ENCODE measurements at regions of chr14 and their contacts with region 1.

Region 1: GRCh38 chr14:61456720-61457119 is 135.3 kb downstream of the PRKCH start:
- DNase-seq: peak; percentile 66 to 91 (median 86)
- ATAC-seq: peak; percentile 39
- H3K4me3 ChIP-seq: no peak overlapping the region
- H3K4me3 Mint-ChIP-seq: no peak overlapping the region
- H3K27ac ChIP-seq: no peak overlapping the region
- H3K27ac Mint-ChIP-seq: peak overlapping the region; percentile 86
- H3K4me1 ChIP-seq: peaks cover 70% of the 10 kb centered on the region
- H3K4me1 Mint-ChIP-seq: peaks cover 85% of the 10 kb centered on the region
- H3K27me3 ChIP-seq: no peaks in the 10 kb centered on the region
- H3K27me3 Mint-ChIP-seq: no peaks in the 10 kb centered on the region
- CTCF ChIP-seq: peak; percentile 84

Region 2: DNA sequence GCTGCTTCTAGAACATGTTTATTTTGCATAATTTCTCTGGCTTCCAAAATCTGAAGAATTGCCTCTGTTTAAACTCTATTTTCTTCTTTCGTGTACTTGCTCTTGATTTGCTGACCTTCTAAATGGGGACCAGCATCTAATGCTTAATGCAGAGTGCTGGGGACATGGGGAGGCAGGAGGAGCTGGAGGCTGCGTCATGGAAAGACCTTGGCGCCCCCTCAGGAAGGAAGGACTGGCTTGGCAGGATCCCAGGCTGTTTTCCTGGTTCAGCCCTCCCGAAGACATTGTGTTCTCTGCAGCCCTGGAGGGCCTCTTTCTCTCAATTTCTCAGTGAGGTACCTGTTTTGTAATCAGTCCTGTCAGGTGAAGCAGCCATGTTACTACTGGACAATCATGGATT is 129.9 kb before region 1 on chr14:
- CTCF ChIA-PET with region 1: interaction called, 20 read pairs
- POLR2A ChIA-PET with region 1: interaction called, 16 read pairs
- intact Hi-C with region 1: loop called in 1 of 2 experiments (anchors 2 kb)
- DNase-seq: peak in 3 of 9 experiments; percentile 24 to 62 (median 25)
- ATAC-seq: no peak
- H3K4me3 ChIP-seq: peak overlapping the region; percentile 90 to 94
- H3K4me3 Mint-ChIP-seq: peak overlapping the region; percentile 96
- H3K27ac ChIP-seq: peak overlapping the region; percentile 51 to 86
- H3K27ac Mint-ChIP-seq: peak overlapping the region; percentile 96
- H3K4me1 ChIP-seq: peaks cover 65% of the 10 kb centered on the region
- H3K4me1 Mint-ChIP-seq: peaks cover 60% of the 10 kb centered on the region
- H3K27me3 ChIP-seq: no peaks in the 10 kb centered on the region
- H3K27me3 Mint-ChIP-seq: no peaks in the 10 kb centered on the region
- CTCF ChIP-seq: no peak

Region 3: DNA sequence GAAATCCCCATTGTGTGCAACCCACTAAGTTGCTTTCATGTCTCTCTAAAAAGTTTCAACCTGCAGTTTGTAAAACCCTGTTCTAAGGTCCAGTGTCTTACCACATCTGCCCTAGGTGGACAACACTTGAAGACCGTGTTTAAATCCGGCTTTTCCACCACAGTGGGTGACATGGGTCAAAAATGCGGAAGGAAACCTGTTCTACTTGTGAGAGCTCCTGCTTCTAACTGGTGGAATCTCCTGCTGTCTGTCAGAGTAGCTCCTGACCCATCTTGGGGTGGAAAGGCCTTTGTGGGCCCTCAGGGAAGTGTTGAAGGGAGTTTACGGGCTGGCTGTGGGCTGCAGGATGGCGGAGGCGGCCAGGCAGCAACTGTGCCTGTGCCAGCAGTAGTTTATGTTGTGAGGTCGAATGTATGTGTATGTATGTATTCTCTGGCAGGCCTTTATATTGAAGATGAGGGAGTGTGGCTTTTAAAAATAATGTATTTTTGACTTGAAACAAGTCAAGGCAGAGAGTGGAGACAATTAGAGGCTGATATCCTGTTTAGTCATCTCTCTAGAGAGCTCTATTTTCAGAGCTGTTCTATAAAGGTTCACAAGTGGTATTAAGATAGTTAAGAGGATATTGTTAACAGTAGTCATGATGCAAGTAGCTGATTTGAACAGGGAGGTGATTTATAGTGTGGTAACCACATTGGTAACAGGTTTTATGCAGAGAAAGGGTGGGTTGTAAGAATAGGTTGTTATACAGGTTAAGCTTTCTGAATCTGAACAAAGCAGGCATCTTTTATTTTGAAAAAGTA is 68.3 kb before region 1 on chr14:
- CTCF ChIA-PET with region 1: interaction called, 10 read pairs
- POLR2A ChIA-PET with region 1: interaction called, 4 read pairs
- intact Hi-C with region 1: loop called in 1 of 2 experiments (anchors 2 kb)
- DNase-seq: peak in 4 of 9 experiments; percentile 43 to 81 (median 54)
- ATAC-seq: peak; percentile 69
- H3K4me3 ChIP-seq: peak overlapping the region; percentile 32 to 46
- H3K4me3 Mint-ChIP-seq: no peak overlapping the region
- H3K27ac ChIP-seq: peak overlapping the region; percentile 53 to 90
- H3K27ac Mint-ChIP-seq: no peak overlapping the region
- H3K4me1 ChIP-seq: peaks cover 98% of the 10 kb centered on the region
- H3K4me1 Mint-ChIP-seq: no peaks in the 10 kb centered on the region
- H3K27me3 ChIP-seq: no peaks in the 10 kb centered on the region
- H3K27me3 Mint-ChIP-seq: no peaks in the 10 kb centered on the region
- CTCF ChIP-seq: no peak

Region 4: DNA sequence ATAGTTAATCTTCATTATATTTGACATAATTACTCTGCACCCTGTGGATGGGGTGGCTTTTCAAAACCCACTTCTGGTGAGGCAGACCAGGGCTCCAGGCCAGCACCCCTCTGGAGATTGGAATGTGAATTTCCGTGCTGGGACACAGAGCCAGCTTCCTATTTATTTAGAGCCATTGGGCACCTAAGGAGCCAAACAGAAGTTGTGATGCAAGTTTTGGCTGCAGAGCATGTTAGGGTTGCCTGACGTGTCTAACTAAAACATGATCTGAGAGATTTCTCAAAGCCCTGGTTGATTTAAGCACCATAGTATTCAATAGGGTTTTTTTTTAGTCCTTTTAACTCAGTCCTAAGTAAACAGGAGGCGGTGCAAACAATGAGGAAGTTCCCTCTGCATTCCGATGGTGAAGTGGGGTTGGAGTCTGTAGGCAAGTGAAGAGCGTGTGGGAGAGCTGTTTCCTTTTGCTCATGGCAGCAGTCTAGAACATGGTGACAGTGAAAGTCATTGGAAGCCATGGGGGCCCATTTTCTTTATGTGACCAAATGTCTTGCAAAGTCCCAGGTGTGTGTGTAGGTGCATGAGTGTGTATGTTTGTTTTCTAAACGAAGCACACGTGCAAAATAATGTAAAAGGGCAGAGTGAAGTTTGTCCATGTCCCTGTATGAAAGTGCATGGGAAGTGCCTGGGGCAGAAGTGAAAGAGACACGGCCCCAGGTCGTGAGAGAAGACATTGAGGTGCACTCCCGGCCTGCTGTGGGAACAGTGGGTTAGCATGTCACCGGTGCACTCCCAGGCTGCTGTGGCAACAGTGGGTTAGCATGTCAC is 17.6 kb before region 1 on chr14:
- CTCF ChIA-PET with region 1: interaction called, 3 read pairs
- POLR2A ChIA-PET with region 1: interaction called, 11 read pairs
- intact Hi-C with region 1: loop called in 1 of 2 experiments (anchors 1 kb)
- DNase-seq: peak in 6 of 9 experiments; percentile 43 to 82 (median 59)
- ATAC-seq: peak; percentile 39
- H3K4me3 ChIP-seq: peak overlapping the region; percentile 19 to 34
- H3K4me3 Mint-ChIP-seq: peak overlapping the region; percentile 74
- H3K27ac ChIP-seq: peak overlapping the region; percentile 31 to 79
- H3K27ac Mint-ChIP-seq: peak overlapping the region; percentile 91
- H3K4me1 ChIP-seq: peaks cover 93% of the 10 kb centered on the region
- H3K4me1 Mint-ChIP-seq: peaks cover 91% of the 10 kb centered on the region
- H3K27me3 ChIP-seq: no peaks in the 10 kb centered on the region
- H3K27me3 Mint-ChIP-seq: no peaks in the 10 kb centered on the region
- CTCF ChIP-seq: no peak

Region 5: GRCh38 chr14:61644834-61645233 is 188.1 kb after region 1 on chr14:
- CTCF ChIA-PET with region 1: no interaction called
- POLR2A ChIA-PET with region 1: no interaction called
- intact Hi-C with region 1: no loop called
- DNase-seq: no peak
- ATAC-seq: no peak
- H3K4me3 ChIP-seq: no peak overlapping the region
- H3K4me3 Mint-ChIP-seq: no peak overlapping the region
- H3K27ac ChIP-seq: no peak overlapping the region
- H3K27ac Mint-ChIP-seq: no peak overlapping the region
- H3K4me1 ChIP-seq: peaks cover 22% of the 10 kb centered on the region
- H3K4me1 Mint-ChIP-seq: peaks cover 27% of the 10 kb centered on the region
- H3K27me3 ChIP-seq: no peaks in the 10 kb centered on the region
- H3K27me3 Mint-ChIP-seq: no peaks in the 10 kb centered on the region
- CTCF ChIP-seq: no peak

Region 6: GRCh38 chr14:61730756-61731373 is 274.1 kb after region 1 on chr14:
- CTCF ChIA-PET with region 1: interaction called, 37 read pairs
- POLR2A ChIA-PET with region 1: no interaction called
- intact Hi-C with region 1: loop called (anchors 1 kb)
- DNase-seq: peak in 3 of 9 experiments; percentile 19 to 58 (median 51)
- ATAC-seq: no peak
- H3K4me3 ChIP-seq: no peak overlapping the region
- H3K4me3 Mint-ChIP-seq: no peak overlapping the region
- H3K27ac ChIP-seq: no peak overlapping the region
- H3K27ac Mint-ChIP-seq: peak overlapping the region; percentile 42
- H3K4me1 ChIP-seq: peaks cover 3% of the 10 kb centered on the region
- H3K4me1 Mint-ChIP-seq: peaks cover 20% of the 10 kb centered on the region
- H3K27me3 ChIP-seq: no peaks in the 10 kb centered on the region
- H3K27me3 Mint-ChIP-seq: no peaks in the 10 kb centered on the region
- CTCF ChIP-seq: peak; percentile 73

Measured in CD8-positive, alpha-beta T cell (primary cell).